ENCODE measurements at regions of chr12 and their contacts with region 1.

Region 1: GRCh38 chr12:51172515-51173431 is at the start of gene TFCP2:
- DNase-seq: peak; percentile 91 to 100 (median 96)

Region 2: DNA sequence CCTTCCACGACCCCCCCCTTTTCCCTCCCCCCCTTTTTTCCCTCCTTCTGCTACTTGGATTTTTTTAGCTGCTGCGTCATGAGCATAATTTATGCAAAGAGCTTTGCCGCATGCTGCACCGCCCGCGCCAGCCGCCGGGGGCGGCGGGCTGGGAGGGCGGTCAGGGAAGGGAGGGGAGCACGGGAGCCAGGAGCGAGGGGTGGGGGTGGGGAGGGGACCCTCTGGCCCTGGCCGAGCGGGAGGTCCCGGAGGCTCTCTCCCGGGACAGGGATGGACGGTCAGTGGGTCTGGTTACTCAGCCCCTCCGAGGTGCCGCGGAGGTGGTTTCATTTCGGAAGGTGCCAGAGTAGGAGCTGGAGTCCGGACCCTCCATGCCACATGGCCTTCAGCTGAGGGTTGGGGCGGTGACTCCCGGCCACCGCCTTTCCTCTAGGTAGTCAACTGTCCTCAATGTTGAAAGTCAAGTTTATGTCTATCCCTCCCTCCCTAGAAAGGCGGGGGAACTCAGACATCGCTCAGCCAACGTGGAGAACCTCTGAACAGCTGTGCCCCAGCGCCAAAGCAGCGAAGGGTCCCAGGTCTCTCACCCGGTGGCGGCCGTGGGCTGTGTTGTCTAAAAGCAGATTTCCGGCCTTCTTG is 45.3 kb after region 1 on chr12 and contains the start of gene POU6F1:
- intact Hi-C with region 1: loop called (anchors 5 kb)
- DNase-seq: peak; percentile 45 to 95 (median 62)

Region 3: DNA sequence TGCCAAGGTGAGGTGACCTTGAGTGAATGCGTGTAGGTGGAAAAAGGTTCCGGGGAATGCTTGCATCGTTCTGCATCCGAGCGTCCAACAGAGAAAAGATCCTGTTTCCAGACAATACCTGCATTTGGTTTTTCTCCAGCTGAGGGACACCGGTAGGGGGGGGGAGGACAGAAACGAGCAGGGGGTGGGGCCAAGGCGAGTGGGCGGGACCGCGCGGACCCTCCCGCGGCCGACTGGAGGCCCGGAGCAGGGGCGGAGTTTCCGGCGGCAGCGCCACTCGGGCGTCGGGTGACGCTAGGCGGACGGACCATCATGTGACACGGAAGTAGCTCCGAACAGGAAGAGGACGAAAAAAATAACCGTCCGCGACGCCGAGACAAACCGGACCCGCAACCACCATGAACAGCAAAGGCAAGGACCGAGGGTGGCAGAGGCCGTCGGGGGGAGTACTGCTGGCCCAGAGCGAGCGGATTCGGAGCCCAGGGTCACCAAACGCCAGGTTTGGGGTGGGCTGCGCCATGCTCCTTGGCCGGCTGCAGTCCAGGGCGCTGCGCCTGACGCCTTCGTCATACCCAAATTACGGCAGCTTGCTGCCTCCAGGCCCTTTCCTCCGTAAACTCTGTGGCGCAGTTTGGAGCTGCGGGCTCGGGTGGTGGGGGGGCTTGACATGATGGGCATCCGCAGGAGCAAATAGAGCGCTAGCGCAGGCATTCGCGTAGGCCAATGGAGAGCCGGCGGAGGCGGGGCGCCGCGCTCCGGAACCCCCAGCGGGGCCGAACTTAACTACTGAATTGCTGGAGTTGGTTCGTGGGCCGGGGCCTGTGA is 65.9 kb after region 1 on chr12 and contains the start of gene DAZAP2:
- intact Hi-C with region 1: loop called (anchors 2 kb)
- DNase-seq: peak; percentile 93 to 99 (median 96)

Region 4: GRCh38 chr12:51254592-51254991 is 81.8 kb after region 1 on chr12:
- intact Hi-C with region 1: no loop called
- DNase-seq: no peak